Caco-2 (cell line): ENCODE measurements at regions of chr15 and their contacts with region 1.

Region 1: DNA sequence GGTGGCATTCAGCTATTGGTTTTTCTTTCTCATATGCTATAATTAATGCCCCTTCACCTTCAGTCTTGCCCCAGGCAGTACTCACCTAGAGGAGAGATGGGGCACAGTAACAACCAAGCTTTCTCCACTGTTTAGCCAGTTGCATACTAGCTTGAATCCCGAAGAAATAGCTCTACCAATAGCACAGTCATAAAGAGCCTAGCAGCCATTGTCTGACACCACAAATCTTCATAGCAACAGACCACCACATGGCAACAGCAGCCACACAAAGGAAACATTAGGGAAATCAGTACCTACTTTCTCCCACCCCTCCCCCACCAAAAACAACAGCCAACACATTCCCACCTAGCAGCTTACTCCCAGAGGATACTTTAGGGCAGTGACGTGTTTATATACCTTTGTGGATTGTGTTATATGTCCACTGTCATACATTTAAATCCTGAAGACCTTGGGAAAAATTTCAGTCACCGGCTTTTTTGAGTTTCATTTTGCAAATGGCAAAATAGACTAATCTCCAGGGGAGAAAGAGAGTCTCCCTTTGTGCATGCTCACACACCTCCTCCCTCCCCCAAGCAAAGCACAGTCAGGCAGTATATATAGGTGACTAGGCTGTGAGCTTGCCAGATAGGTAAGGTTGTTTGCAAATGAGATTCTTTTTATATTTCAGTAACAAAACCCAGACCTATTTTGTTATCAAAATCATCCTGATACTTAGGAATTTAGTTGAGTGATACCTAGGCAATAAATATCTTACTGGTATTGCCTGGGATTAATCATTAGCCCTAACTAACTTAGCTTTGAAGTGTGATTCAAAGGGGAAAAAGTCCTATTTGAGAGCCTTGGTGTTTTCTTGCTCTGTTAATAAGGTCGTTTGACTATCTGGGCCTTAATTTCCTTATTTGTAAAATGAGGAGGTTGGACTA is 140.6 kb downstream of the RBPMS2 start:
- DNase-seq: peak; percentile 78 to 80
- H3K4me3 ChIP-seq: peak overlapping the region; percentile 3; the same call in 1 of the 2 replicates
- H3K4me3 Mint-ChIP-seq: peak overlapping the region; percentile 67
- H3K27ac Mint-ChIP-seq: peak overlapping the region; percentile 66
- H3K4me1 ChIP-seq: peaks cover 57% of the 10 kb centered on the region
- H3K4me1 Mint-ChIP-seq: peaks cover 36% of the 10 kb centered on the region
- H3K27me3 ChIP-seq: no peaks in the 10 kb centered on the region
- H3K27me3 Mint-ChIP-seq: no peaks in the 10 kb centered on the region
- CTCF ChIP-seq: no peak

Region 2: GRCh38 chr15:64599716-64600115 is 35.1 kb before region 1 on chr15:
- CTCF ChIA-PET with region 1: interaction called, 3 read pairs
- POLR2A ChIA-PET with region 1: no interaction called
- intact Hi-C with region 1: loop called (anchors 2 kb)
- DNase-seq: peak in 1 of 2 experiments; percentile 5
- H3K4me3 ChIP-seq: no peak overlapping the region
- H3K4me3 Mint-ChIP-seq: no peak overlapping the region
- H3K27ac Mint-ChIP-seq: peak overlapping the region; percentile 25
- H3K4me1 ChIP-seq: peaks cover 23% of the 10 kb centered on the region
- H3K4me1 Mint-ChIP-seq: peaks cover 32% of the 10 kb centered on the region
- H3K27me3 ChIP-seq: no peaks in the 10 kb centered on the region
- H3K27me3 Mint-ChIP-seq: no peaks in the 10 kb centered on the region
- CTCF ChIP-seq: no peak